Right cardiac atrium (tissue), 5 donors: ENCODE measurements at regions of chr7 and their contacts with region 1.

Region 1: DNA sequence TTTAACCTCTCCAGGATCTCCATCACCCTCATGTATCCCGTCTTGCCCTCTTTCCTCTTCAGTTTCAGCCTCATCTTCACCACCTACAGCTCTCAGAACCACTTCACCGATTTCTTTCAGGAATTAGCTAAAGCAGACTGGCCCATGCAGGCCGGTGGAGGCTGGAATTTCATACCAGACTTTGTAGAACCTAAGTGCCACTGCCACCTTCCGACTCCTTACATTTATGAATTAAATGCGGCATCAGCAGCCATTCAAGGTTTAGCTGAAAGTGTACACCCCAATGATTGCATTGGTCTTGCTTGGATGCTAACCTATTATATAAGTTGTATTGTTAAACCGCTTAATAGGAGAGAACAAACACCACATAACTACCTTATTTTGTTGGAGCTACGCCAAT is 33.1 kb upstream of the AKR1B1 start:
- DNase-seq: no peak
- ATAC-seq: no peak
- H3K4me3 ChIP-seq: no peak overlapping the region
- H3K27ac ChIP-seq: no peak overlapping the region
- H3K4me1 ChIP-seq: no peaks in the 10 kb centered on the region
- H3K27me3 ChIP-seq: no peaks in the 10 kb centered on the region

Region 2: GRCh38 chr7:134454277-134454676 is 37.7 kb before region 1 on chr7:
- intact Hi-C with region 1: loop called in 1 of 4 experiments (anchors 5 kb)
- DNase-seq: no peak
- ATAC-seq: no peak
- H3K4me3 ChIP-seq: no peak overlapping the region
- H3K27ac ChIP-seq: no peak overlapping the region
- H3K4me1 ChIP-seq: peaks cover 13% of the 10 kb centered on the region
- H3K27me3 ChIP-seq: no peaks in the 10 kb centered on the region